Naive thymus-derived CD4-positive, alpha-beta T cell (primary cell): ENCODE measurements at regions of chr11 and their contacts with region 1.

Region 1: DNA sequence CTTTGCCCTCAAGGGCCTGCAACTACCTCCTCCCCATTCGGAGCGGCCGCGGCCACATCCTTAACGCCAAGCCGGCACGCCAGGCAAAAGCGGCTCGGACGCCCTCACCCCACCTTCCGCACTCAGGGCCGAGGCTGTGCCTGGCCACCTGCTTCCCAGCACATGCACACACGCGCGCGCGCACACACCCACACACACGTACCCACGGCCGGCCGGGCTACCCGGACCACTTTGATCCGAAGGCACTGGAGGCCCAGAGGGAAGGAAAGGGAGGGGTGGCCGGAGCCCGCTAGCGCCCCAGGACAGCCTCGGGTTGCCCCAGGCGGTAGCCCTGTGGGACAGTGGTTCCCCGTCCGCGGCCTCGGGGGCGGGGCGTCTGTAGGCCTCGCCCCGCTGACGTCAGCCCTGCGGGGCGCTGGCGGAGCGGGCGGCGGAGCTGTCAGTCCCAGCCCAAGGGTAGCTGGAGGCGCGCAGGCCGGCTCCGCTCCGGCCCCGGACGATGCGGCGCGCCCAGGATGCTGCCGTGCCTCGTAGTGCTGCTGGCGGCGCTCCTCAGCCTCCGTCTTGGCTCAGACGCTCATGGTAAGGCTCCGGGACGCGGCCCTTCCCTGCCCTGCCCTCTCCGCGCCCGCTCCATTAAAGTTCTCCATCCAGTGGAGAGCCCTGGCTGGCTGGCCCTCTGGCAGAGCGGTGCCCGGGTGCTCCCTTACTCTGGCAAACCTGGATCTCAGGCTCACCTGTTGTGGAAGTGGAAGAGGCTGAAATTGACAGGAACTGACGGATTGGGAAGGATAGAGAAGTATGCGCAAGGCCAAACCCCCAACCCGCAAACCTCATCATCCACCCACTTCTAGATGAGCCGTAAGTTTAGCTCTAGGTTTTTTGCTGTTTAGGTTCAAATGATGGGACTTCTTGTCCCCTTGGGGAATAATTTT is at the start of gene IL10RA:
- DNase-seq: peak; percentile 72 to 95 (median 80)
- ATAC-seq: peak; percentile 92
- H3K4me3 ChIP-seq: peak within 1 kb of the TSS; percentile 97
- H3K4me3 Mint-ChIP-seq: peak within 1 kb of the TSS; percentile 84 to 97 (median 91)
- H3K27ac ChIP-seq: peak within 1 kb of the TSS; percentile 91
- H3K27ac Mint-ChIP-seq: peak within 1 kb of the TSS; percentile 87 to 98 (median 92)
- H3K4me1 ChIP-seq: peaks cover 43 to 45% of the 10 kb centered on the region in 2 donors
- H3K4me1 Mint-ChIP-seq: peaks cover 44 to 78% (median 69%) of the 10 kb centered on the region in 7 donors
- H3K27me3 ChIP-seq: no peaks in the 10 kb centered on the region
- H3K27me3 Mint-ChIP-seq: no peaks in the 10 kb centered on the region
- total RNA-seq, gene IL10RA: 154 to 300 (median 184) TPM

Region 2: DNA sequence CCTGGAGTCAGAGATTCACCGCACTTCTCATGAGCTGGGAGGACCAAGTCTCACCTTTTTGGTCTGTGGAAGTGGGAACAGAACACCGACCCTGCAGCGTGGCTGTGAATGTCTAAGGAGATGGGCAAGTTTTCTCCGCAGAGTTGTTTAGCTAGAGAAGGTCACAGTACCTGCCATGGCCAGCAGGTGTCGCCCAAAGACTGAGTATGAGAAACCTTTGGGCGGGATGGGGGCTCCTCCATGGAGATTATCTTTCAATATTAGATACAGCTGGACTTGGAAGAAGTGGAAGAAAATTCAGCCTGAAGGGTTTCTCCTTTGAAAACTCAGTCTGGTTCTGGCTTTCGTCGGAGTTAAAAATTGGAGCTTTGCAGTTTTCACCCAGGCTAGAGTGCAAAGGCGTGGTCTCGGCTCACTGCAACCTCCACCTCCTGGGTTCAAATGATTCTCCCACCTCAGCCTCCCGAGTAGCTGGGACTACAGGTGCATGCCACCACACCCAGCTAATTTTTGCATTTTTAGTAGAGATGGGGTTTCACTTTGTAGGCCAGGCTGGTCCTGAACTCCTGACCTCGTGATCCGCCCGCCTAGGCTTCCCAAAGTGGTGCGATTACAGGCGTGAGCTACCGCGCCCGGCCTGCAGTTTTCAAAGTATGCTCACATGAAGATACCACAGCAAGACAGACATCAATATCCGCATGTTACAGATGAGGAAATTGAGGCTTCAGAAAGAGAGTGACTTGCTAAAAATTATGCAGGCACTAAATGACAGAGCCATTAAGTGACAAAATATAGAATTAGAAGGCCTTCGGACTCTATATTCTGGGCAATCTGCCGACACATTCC is 178.5 kb before region 1 on chr11:
- CTCF ChIA-PET with region 1: interaction called, 3 read pairs
- POLR2A ChIA-PET with region 1: no interaction called
- intact Hi-C with region 1: loop called in 1 of 2 experiments (anchors 2 kb)
- DNase-seq: peak in 8 of 9 donors; percentile 54 to 76 (median 62)
- ATAC-seq: peak; percentile 76
- H3K4me3 ChIP-seq: no peak overlapping the region
- H3K4me3 Mint-ChIP-seq: peak overlapping the region in 1 of 10 donors; percentile 4
- H3K27ac ChIP-seq: no peak overlapping the region
- H3K27ac Mint-ChIP-seq: peak overlapping the region in 2 of 9 donors; percentile 33 to 64
- H3K4me1 ChIP-seq: peaks cover 0 to 4% of the 10 kb centered on the region in 2 donors
- H3K4me1 Mint-ChIP-seq: peaks cover 6 to 19% (median 9%) of the 10 kb centered on the region in 7 donors
- H3K27me3 ChIP-seq: no peaks in the 10 kb centered on the region
- H3K27me3 Mint-ChIP-seq: peaks cover 0 to 3% (median 0%) of the 10 kb centered on the region in 5 donors

Region 3: DNA sequence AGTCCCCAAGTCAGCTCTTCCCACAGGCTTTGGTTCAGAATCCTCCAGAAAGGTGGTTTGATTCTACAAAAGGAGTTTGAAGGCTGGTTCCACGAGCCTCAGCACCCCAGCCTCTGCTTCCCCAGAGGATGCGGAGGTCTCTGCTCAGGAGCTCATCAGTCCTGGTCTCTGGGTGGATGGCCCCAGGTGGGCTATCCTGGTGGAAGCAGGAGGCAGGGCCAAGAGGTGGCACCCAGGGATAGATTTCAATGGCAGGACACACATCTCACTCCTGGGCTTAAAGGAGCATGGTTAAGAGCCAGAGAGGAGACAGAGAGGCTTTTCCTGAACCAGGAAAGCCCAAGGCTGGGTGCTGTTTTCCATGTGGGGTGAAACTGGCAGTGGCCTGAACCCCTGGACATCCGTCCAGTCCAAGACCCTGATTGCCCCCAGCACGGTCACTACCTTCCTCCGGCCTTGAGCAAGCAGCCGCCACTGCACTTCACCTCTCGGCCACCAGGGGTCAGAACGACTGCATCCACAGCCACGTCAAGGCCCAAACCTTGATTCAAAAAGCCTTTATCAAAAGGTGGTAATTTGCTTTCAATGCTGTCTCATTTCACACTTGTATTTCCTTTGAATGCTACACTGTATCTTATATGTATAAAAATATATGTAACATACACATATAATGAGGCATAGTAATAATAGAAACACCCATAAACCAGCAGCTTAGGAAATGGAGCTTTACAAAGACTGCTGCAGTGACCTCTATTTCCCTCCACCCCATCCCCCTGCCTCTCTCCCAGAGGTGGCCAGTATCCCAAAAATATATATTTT is 142.3 kb before region 1 on chr11:
- CTCF ChIA-PET with region 1: interaction called, 4 read pairs
- POLR2A ChIA-PET with region 1: no interaction called
- intact Hi-C with region 1: loop called in 1 of 2 experiments (anchors 2 kb)
- DNase-seq: peak; percentile 63 to 84 (median 72)
- ATAC-seq: peak; percentile 78
- H3K4me3 ChIP-seq: no peak overlapping the region
- H3K4me3 Mint-ChIP-seq: no peak overlapping the region
- H3K27ac ChIP-seq: no peak overlapping the region
- H3K27ac Mint-ChIP-seq: peak overlapping the region in 2 of 9 donors; percentile 46 to 51
- H3K4me1 ChIP-seq: peaks cover 6 to 9% of the 10 kb centered on the region in 2 donors
- H3K4me1 Mint-ChIP-seq: peaks cover 0 to 10% (median 0%) of the 10 kb centered on the region in 7 donors
- H3K27me3 ChIP-seq: no peaks in the 10 kb centered on the region
- H3K27me3 Mint-ChIP-seq: peaks cover 0 to 32% (median 0%) of the 10 kb centered on the region in 5 donors

Region 4: GRCh38 chr11:117885777-117886176 is 100.4 kb before region 1 on chr11:
- CTCF ChIA-PET with region 1: no interaction called
- POLR2A ChIA-PET with region 1: no interaction called
- intact Hi-C with region 1: no loop called
- DNase-seq: no peak
- ATAC-seq: no peak
- H3K4me3 ChIP-seq: no peak overlapping the region
- H3K4me3 Mint-ChIP-seq: no peak overlapping the region
- H3K27ac ChIP-seq: no peak overlapping the region
- H3K27ac Mint-ChIP-seq: no peak overlapping the region
- H3K4me1 ChIP-seq: no peaks in the 10 kb centered on the region
- H3K4me1 Mint-ChIP-seq: no peaks in the 10 kb centered on the region
- H3K27me3 ChIP-seq: no peaks in the 10 kb centered on the region
- H3K27me3 Mint-ChIP-seq: peaks cover 0 to 35% (median 4%) of the 10 kb centered on the region in 5 donors

Region 5: DNA sequence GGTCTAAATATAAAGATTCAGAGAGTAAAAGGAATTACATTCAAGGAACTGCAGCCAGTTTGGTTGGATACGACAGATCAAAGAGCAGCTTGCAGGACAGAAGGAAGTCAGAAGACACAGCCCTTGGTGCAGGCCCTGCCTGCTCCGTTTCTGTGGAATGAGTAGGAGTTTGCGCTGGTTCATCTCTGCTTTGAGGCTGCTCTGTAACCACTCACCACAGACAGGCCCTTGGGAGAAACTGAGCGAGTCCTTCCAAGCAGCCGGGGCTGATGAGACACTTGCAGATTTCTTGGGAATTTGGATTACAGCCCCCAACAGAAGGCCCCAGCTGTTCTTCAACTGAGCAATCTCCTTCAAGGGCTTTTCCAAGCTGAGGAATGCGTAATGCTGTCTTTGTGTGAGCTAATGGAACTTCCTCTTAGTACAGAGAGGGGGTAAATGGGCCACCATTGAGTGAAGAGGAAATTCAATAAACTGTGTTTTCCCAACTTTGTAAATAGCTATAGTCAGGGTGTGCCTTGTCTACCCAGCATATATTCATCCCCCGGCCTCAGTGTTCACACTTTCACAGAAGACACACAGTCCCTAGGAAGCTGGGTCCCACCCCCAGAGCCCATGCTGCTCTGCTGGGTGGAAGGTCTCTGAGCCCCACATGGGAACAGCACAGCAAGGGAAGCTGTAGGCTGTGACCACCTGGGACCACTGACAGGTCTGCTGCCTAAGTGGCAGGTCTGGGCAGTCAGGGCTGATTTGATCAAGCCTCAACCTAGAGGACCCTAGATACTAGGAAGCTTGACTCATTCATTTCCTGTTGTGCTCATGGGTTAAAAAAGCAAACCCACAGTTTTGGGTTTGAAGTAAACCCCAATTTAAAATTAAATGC is 16.6 kb after region 1 on chr11:
- CTCF ChIA-PET with region 1: interaction called, 11 read pairs
- POLR2A ChIA-PET with region 1: interaction called, 255 read pairs
- intact Hi-C with region 1: loop called (anchors 1 kb)
- DNase-seq: peak in 1 of 9 donors; percentile 70
- ATAC-seq: peak; percentile 55
- H3K4me3 ChIP-seq: peak overlapping the region; percentile 23
- H3K4me3 Mint-ChIP-seq: peak overlapping the region; percentile 1 to 82 (median 60)
- H3K27ac ChIP-seq: peak overlapping the region; percentile 58
- H3K27ac Mint-ChIP-seq: peak overlapping the region; percentile 51 to 98 (median 87)
- H3K4me1 ChIP-seq: peaks cover 64 to 96% of the 10 kb centered on the region in 2 donors
- H3K4me1 Mint-ChIP-seq: peaks cover 66 to 97% (median 80%) of the 10 kb centered on the region in 7 donors
- H3K27me3 ChIP-seq: no peaks in the 10 kb centered on the region
- H3K27me3 Mint-ChIP-seq: no peaks in the 10 kb centered on the region

Region 6: GRCh38 chr11:118046051-118046963 is 60.1 kb after region 1 on chr11:
- CTCF ChIA-PET with region 1: interaction called, 10 read pairs
- POLR2A ChIA-PET with region 1: interaction called, 75 read pairs
- intact Hi-C with region 1: loop called (anchors 1 kb)
- DNase-seq: peak in 7 of 9 donors; percentile 44 to 71 (median 52)
- ATAC-seq: peak; percentile 90
- H3K4me3 ChIP-seq: no peak overlapping the region
- H3K4me3 Mint-ChIP-seq: peak overlapping the region in 9 of 10 donors; percentile 26 to 66 (median 44)
- H3K27ac ChIP-seq: peak overlapping the region; percentile 68
- H3K27ac Mint-ChIP-seq: peak overlapping the region; percentile 68 to 94 (median 87)
- H3K4me1 ChIP-seq: peaks cover 86 to 87% of the 10 kb centered on the region in 2 donors
- H3K4me1 Mint-ChIP-seq: peaks cover 69 to 96% (median 87%) of the 10 kb centered on the region in 7 donors
- H3K27me3 ChIP-seq: no peaks in the 10 kb centered on the region
- H3K27me3 Mint-ChIP-seq: no peaks in the 10 kb centered on the region

Region 7: DNA sequence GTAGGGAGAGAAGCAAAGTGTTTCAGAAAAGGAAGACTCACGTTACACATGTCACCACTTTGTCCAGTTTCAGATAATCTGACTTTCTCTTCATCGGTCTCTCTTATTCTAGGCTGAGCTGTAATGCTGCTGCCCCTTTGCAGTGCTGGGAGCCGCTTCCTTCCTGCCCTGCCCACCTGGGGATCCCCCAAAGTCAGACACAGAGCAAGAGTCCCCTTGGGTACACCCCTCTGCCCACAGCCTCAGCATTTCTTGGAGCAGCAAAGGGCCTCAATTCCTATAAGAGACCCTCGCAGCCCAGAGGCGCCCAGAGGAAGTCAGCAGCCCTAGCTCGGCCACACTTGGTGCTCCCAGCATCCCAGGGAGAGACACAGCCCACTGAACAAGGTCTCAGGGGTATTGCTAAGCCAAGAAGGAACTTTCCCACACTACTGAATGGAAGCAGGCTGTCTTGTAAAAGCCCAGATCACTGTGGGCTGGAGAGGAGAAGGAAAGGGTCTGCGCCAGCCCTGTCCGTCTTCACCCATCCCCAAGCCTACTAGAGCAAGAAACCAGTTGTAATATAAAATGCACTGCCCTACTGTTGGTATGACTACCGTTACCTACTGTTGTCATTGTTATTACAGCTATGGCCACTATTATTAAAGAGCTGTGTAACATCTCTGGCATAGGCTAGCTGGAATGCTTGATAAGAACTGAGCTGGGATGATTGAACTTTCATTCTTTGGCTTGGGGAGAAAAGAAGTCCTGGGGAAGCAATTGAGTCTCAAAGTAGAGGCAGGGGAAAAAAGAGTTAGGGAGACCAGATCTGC is 131.8 kb after region 1 on chr11:
- CTCF ChIA-PET with region 1: no interaction called
- POLR2A ChIA-PET with region 1: no interaction called
- intact Hi-C with region 1: no loop called
- DNase-seq: no peak
- ATAC-seq: no peak
- H3K4me3 ChIP-seq: no peak overlapping the region
- H3K4me3 Mint-ChIP-seq: peak overlapping the region in 1 of 10 donors; percentile 15
- H3K27ac ChIP-seq: no peak overlapping the region
- H3K27ac Mint-ChIP-seq: no peak overlapping the region
- H3K4me1 ChIP-seq: no peaks in the 10 kb centered on the region
- H3K4me1 Mint-ChIP-seq: peaks cover 0 to 25% (median 0%) of the 10 kb centered on the region in 7 donors
- H3K27me3 ChIP-seq: no peaks in the 10 kb centered on the region
- H3K27me3 Mint-ChIP-seq: peaks cover 10 to 34% (median 13%) of the 10 kb centered on the region in 5 donors

Region 8: DNA sequence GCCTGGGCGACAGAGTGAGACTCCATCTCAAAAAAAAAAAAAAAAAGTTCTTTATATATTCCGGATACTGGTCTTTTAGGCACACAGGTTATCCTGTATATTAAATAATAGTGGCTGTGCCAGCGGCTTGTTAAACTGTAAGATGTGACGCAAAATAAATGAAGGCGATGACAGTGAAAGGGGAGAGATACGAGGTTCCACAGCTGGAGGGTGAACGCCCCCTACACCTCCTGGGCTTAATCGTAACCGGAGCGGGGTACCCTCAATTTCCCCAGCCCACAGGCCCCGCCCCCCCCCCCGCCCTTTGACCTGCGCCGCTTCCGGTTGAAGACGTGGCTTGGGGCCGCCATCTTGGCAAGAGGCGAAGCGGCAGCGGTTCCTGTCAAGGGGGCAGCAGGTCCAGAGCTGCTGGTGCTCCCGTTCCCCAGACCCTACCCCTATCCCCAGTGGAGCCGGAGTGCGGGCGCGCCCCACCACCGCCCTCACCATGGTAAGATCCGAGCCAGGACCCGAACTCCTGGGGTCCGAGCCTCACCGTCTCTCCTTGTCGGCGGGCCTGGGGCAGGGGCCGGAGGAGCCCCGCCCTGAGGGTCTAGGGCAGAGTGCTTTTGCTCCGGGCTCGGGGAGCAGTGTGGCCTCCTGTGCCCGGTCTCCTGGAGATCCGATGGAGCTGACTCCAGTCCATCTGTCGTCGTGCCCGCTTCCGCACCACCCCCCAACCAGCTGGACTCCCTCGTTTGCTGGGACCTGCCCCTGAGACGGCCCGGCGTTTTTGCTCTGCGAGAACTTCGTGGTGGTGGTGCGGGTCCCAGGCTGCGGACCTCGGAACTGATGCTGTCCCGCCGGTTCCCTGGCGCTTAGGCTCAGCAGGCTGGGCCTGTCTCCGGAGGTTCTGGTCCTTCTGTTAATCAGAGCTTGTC is 586.1 kb after region 1 on chr11 and contains the start of gene ARCN1:
- CTCF ChIA-PET with region 1: no interaction called
- POLR2A ChIA-PET with region 1: no interaction called
- intact Hi-C with region 1: loop called in 1 of 2 experiments (anchors 5 kb)
- DNase-seq: peak; percentile 58 to 82 (median 79)
- ATAC-seq: peak; percentile 94
- H3K4me3 ChIP-seq: peak within 1 kb of the TSS; percentile 98
- H3K4me3 Mint-ChIP-seq: peak within 1 kb of the TSS; percentile 83 to 99 (median 96)
- H3K27ac ChIP-seq: peak within 1 kb of the TSS; percentile 100
- H3K27ac Mint-ChIP-seq: peak within 1 kb of the TSS; percentile 92 to 98 (median 98)
- H3K4me1 ChIP-seq: peaks cover 26 to 36% of the 10 kb centered on the region in 2 donors
- H3K4me1 Mint-ChIP-seq: peaks cover 35 to 58% (median 50%) of the 10 kb centered on the region in 7 donors
- H3K27me3 ChIP-seq: no peaks in the 10 kb centered on the region
- H3K27me3 Mint-ChIP-seq: no peaks in the 10 kb centered on the region
- total RNA-seq, gene ARCN1: 71.2 to 134 (median 115) TPM